ENCODE measurements at regions of chr18 and their contacts with region 1.

Region 1: GRCh38 chr18:48790226-48790874 is 160.4 kb downstream of the SMAD7 start:
- DNase-seq: peak; percentile 96
- ATAC-seq: peak; percentile 85 to 86

Region 2: GRCh38 chr18:48680339-48681221 is 109.8 kb before region 1 on chr18:
- intact Hi-C with region 1: loop called in 1 of 2 experiments (anchors 1 kb)
- DNase-seq: peak; percentile 94
- ATAC-seq: peak; percentile 91

Region 3: GRCh38 chr18:49006641-49007454 is 216.5 kb after region 1 on chr18:
- intact Hi-C with region 1: no loop called
- DNase-seq: no peak
- ATAC-seq: peak in 1 of 2 donors; percentile 12

Measured in left cardiac atrium (tissue), 4 donors.